Mammary epithelial cell (primary cell): ENCODE measurements at regions of chr7 and their contacts with region 1.

Region 1: DNA sequence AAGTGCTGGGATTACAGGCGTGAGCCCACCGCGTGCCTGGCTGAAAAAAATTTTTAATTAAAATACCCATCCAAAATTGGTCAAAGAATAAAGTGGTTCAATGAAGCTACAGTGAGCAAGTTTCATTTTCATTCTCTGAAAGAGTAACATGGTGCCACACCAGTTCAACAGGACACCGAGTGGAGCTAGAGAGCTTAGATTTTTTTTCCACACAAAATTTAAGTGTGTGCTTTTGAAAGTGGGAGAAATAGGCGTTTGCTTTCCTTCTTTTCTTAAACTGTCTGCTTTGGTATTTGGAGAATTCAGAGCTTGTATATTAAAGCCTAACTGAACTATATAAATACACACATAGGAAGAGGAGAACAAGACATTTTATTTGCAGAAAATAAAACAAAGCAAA is 43.4 kb downstream of the BPGM start:
- DNase-seq: no peak
- H3K4me3 ChIP-seq: no peak overlapping the region
- H3K27ac ChIP-seq: no peak overlapping the region
- H3K4me1 ChIP-seq: peaks cover 39% of the 10 kb centered on the region
- H3K27me3 ChIP-seq: no peaks in the 10 kb centered on the region
- CTCF ChIP-seq: peak; percentile 32 to 50

Region 2: DNA sequence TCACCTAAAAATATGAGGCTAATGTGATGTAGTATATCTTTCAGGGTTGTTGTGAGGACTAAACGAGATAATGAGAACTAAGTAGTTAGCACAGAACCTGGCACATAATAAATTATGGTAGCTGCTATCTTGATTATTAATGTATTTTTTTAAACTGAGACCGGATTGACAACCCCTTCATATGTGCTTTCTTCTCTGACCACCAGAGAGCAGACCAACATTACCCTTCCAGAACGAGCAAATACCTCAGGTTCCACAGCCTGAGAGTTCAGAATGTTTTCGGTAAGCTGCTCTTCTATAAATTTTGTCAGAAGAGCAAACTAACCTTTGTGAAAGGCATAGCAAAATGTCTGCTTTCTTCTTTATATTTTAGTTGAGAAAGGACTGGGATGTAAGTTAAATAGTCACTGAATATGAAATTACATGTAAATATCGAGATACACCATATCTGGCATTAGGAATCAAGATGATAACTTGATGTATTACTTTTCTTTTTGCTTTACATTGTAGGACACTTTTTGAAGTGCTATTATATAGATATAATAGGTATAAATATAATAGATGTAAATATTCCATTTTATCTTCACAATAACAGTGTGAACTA is 57.0 kb before region 1 on chr7:
- CTCF ChIA-PET with region 1: no interaction called
- dilution Hi-C with region 1: no loop called
- in situ Hi-C with region 1: no loop called
- intact Hi-C with region 1: loop called (anchors 2 kb)
- DNase-seq: peak; percentile 57
- H3K4me3 ChIP-seq: no peak overlapping the region
- H3K27ac ChIP-seq: no peak overlapping the region
- H3K4me1 ChIP-seq: peaks cover 7% of the 10 kb centered on the region
- H3K27me3 ChIP-seq: no peaks in the 10 kb centered on the region
- CTCF ChIP-seq: peak; percentile 65 to 66

Region 3: GRCh38 chr7:134755401-134756022 is 65.5 kb after region 1 on chr7:
- CTCF ChIA-PET with region 1: interaction called, 3 read pairs
- dilution Hi-C with region 1: no loop called
- in situ Hi-C with region 1: no loop called
- intact Hi-C with region 1: loop called (anchors 1 kb)
- DNase-seq: no peak
- H3K4me3 ChIP-seq: no peak overlapping the region
- H3K27ac ChIP-seq: no peak overlapping the region
- H3K4me1 ChIP-seq: peaks cover 17% of the 10 kb centered on the region
- H3K27me3 ChIP-seq: no peaks in the 10 kb centered on the region
- CTCF ChIP-seq: peak; percentile 69 to 71

Region 4: DNA sequence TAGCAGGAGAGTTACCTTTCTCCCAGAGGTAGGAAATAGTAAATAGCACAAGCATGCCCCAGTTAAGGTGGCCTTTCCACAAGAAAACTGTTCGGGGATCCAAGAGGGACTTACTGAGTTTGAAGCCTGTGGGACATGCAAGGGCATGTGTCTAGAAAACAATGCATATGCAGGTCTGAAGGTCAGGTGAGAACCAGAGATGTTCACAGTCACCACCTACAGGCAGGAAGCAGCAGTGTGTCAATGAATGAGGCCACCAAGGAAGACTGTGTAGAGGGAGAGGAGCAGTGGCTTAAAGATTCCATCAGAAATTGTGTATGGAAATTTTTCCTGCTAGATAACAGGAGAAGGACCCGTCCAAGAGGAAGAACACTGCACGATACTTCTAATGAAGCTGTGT is 155.5 kb after region 1 on chr7:
- CTCF ChIA-PET with region 1: no interaction called
- dilution Hi-C with region 1: no loop called
- in situ Hi-C with region 1: no loop called
- intact Hi-C with region 1: loop called (anchors 1 kb)
- DNase-seq: peak; percentile 73
- H3K4me3 ChIP-seq: no peak overlapping the region
- H3K27ac ChIP-seq: peak overlapping the region; percentile 59
- H3K4me1 ChIP-seq: peaks cover 26% of the 10 kb centered on the region
- H3K27me3 ChIP-seq: no peaks in the 10 kb centered on the region
- CTCF ChIP-seq: peak; percentile 81 to 84

Region 5: GRCh38 chr7:134943764-134944400 is 253.9 kb after region 1 on chr7:
- CTCF ChIA-PET with region 1: no interaction called
- dilution Hi-C with region 1: no loop called
- in situ Hi-C with region 1: loop called in 1 of 2 experiments (anchors 25 kb)
- intact Hi-C with region 1: no loop called
- DNase-seq: no peak
- H3K4me3 ChIP-seq: no peak overlapping the region
- H3K27ac ChIP-seq: no peak overlapping the region
- H3K4me1 ChIP-seq: peaks cover 7% of the 10 kb centered on the region
- H3K27me3 ChIP-seq: no peaks in the 10 kb centered on the region
- CTCF ChIP-seq: no peak

Region 6: GRCh38 chr7:134986363-134987251 is 296.6 kb after region 1 on chr7 and contains the start of gene AGBL3:
- CTCF ChIA-PET with region 1: interaction called, 10 read pairs
- dilution Hi-C with region 1: no loop called
- in situ Hi-C with region 1: no loop called
- intact Hi-C with region 1: no loop called
- DNase-seq: peak; percentile 88
- H3K4me3 ChIP-seq: peak within 1 kb of the TSS; percentile 70 to 86 (median 71)
- H3K27ac ChIP-seq: peak within 1 kb of the TSS; percentile 64
- H3K4me1 ChIP-seq: no peaks in the 10 kb centered on the region
- H3K27me3 ChIP-seq: no peaks in the 10 kb centered on the region
- CTCF ChIP-seq: peak; percentile 28 to 72
- total RNA-seq, gene AGBL3: 0.61 to 1.2 TPM

Region 7: DNA sequence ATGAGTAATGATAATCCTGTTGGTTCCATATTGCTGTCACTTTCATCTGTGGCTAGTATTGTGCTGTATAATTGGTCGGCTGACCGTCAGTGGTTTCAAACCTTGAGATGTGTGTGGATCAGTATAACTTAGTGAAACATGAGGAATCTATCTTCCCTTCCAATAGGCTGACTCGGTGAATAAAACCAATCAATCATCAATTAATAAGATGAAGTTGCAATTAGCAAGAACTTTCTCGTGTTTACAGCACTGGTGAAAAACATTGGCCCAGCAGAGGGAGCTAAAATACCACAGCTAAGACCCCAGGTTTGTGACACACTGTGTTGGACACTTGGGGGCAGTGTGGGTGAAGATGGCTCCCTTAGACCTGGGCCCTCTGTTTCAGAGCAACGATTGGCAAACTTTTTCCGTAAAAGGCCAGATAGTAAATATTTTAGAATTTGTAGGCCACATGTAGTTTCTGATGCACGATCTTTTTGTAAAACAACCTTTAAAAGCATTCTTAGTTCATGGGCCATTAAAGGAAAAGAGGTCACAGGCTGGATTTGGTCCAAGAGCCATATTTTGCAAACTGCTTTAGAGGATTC is 591.4 kb after region 1 on chr7:
- CTCF ChIA-PET with region 1: interaction called, 8 read pairs
- dilution Hi-C with region 1: no loop called
- in situ Hi-C with region 1: no loop called
- intact Hi-C with region 1: loop called (anchors 2 kb)
- DNase-seq: peak; percentile 69
- H3K4me3 ChIP-seq: no peak overlapping the region
- H3K27ac ChIP-seq: no peak overlapping the region
- H3K4me1 ChIP-seq: peaks cover 20% of the 10 kb centered on the region
- H3K27me3 ChIP-seq: no peaks in the 10 kb centered on the region
- CTCF ChIP-seq: peak; percentile 99